ENCODE measurements at regions of chr4 and their contacts with region 1.

Region 1: GRCh38 chr4:47084111-47084510 is 52.7 kb downstream of the GABRB1 start:
- DNase-seq: no peak
- ATAC-seq: no peak
- H3K4me3 ChIP-seq: no peak overlapping the region
- H3K27ac ChIP-seq: no peak overlapping the region
- H3K4me1 ChIP-seq: no peaks in the 10 kb centered on the region
- H3K27me3 ChIP-seq: no peaks in the 10 kb centered on the region
- CTCF ChIP-seq: no peak
- EP300 ChIP-seq: no peak
- POLR2A ChIP-seq: no peak
- RAD21 ChIP-seq: no peak

Region 2: GRCh38 chr4:46954643-46955042 is 129.5 kb before region 1 on chr4:
- CTCF ChIA-PET with region 1: no interaction called
- POLR2A ChIA-PET with region 1: no interaction called
- RAD21 ChIA-PET with region 1: no interaction called
- SMC1A ChIA-PET with region 1: no interaction called
- in situ Hi-C with region 1: no loop called
- intact Hi-C with region 1: no loop called
- DNase-seq: no peak
- ATAC-seq: no peak
- H3K4me3 ChIP-seq: no peak overlapping the region
- H3K27ac ChIP-seq: no peak overlapping the region
- H3K4me1 ChIP-seq: no peaks in the 10 kb centered on the region
- H3K27me3 ChIP-seq: no peaks in the 10 kb centered on the region
- CTCF ChIP-seq: no peak
- EP300 ChIP-seq: no peak
- POLR2A ChIP-seq: no peak
- RAD21 ChIP-seq: no peak

Region 3: DNA sequence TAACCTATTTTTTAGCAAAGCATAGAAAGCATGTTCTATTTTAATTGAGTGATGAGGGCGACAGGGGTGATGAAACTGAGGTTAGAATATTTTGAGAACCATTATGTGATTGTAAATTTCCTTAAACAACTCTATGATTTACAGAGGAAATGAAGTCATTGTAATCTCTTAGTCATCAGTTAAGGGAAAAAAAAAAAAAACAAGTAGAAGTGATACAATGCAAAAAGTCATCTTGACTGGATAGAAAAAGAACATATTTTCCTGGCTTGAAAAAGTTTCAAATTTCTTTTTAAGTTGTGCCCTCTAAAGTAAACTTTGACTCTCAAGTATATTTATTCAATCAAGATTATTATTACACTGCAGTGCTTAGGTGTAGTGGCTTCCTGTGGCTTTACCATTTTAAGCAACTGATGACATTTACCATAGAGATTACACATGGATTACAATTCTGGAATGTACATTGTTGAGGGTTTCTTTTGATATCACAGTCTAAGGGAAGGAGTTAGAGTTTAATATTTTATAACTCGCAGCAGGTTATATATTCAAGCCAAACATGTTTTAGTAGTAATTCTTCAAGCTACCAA is 12.2 kb before region 1 on chr4:
- CTCF ChIA-PET with region 1: interaction called, 3 read pairs
- POLR2A ChIA-PET with region 1: no interaction called
- RAD21 ChIA-PET with region 1: no interaction called
- SMC1A ChIA-PET with region 1: interaction called, 24 read pairs
- in situ Hi-C with region 1: no loop called
- intact Hi-C with region 1: no loop called
- DNase-seq: no peak
- ATAC-seq: no peak
- H3K4me3 ChIP-seq: no peak overlapping the region
- H3K27ac ChIP-seq: no peak overlapping the region
- H3K4me1 ChIP-seq: no peaks in the 10 kb centered on the region
- H3K27me3 ChIP-seq: no peaks in the 10 kb centered on the region
- CTCF ChIP-seq: no peak
- EP300 ChIP-seq: no peak
- POLR2A ChIP-seq: no peak
- RAD21 ChIP-seq: no peak

Region 4: DNA sequence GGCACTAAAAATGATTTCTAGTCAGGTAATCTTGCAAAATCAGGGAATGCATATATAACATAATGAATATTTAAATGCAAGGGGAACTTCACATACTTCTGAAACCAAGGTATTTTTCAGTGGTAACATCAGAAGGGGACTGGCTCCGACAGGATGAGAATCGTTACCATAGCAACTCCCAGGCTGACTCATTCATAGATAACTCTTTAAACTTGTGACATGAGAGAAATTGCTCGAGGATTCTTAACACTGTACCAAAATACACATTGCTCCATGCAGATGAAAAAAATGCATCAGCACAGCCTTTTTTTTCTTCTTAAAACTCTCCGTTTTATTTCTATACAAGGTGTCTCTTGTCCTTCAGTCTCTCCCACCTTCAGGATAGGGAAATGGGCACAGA is 61.5 kb after region 1 on chr4:
- CTCF ChIA-PET with region 1: no interaction called
- POLR2A ChIA-PET with region 1: no interaction called
- RAD21 ChIA-PET with region 1: no interaction called
- SMC1A ChIA-PET with region 1: no interaction called
- in situ Hi-C with region 1: no loop called
- intact Hi-C with region 1: no loop called
- DNase-seq: peak; percentile 41
- ATAC-seq: peak; percentile 97
- H3K4me3 ChIP-seq: no peak overlapping the region
- H3K27ac ChIP-seq: no peak overlapping the region
- H3K4me1 ChIP-seq: peaks cover 9% of the 10 kb centered on the region
- H3K27me3 ChIP-seq: no peaks in the 10 kb centered on the region
- CTCF ChIP-seq: no peak
- EP300 ChIP-seq: peak; percentile 51 to 80; a peak in 3 of 4 replicates
- POLR2A ChIP-seq: no peak
- RAD21 ChIP-seq: no peak